ENCODE measurements at regions of chr14 and their contacts with region 1.

Region 1: GRCh38 chr14:32576088-32576795 is 247.1 kb downstream of the AKAP6 start:
- DNase-seq: no peak
- ATAC-seq: peak; percentile 87

Region 2: DNA sequence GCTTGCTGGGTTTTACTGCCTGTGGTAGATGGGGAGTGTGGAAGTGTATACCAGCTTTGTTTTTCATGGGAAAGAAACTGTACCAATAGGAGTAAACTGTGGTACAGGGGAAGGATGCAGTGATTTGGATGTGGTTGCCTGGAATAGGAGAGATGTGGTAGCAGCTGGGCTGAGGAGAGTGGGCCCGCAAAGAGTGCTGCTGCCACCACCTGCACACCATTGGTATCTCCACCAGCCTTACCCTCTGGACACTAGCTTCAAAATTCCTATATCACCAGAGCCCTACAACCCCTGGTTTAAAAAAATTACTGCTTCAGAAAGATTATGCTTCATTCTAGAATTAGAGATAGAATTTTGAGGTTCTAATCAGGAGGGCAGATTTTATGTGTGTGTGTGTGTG is 193.5 kb before region 1 on chr14:
- intact Hi-C with region 1: no loop called
- DNase-seq: no peak
- ATAC-seq: peak; percentile 75

Region 3: GRCh38 chr14:32702562-32702961 is 126.3 kb after region 1 on chr14:
- intact Hi-C with region 1: loop called (anchors 10 kb)
- DNase-seq: peak; percentile 63
- ATAC-seq: peak; percentile 77

Region 4: DNA sequence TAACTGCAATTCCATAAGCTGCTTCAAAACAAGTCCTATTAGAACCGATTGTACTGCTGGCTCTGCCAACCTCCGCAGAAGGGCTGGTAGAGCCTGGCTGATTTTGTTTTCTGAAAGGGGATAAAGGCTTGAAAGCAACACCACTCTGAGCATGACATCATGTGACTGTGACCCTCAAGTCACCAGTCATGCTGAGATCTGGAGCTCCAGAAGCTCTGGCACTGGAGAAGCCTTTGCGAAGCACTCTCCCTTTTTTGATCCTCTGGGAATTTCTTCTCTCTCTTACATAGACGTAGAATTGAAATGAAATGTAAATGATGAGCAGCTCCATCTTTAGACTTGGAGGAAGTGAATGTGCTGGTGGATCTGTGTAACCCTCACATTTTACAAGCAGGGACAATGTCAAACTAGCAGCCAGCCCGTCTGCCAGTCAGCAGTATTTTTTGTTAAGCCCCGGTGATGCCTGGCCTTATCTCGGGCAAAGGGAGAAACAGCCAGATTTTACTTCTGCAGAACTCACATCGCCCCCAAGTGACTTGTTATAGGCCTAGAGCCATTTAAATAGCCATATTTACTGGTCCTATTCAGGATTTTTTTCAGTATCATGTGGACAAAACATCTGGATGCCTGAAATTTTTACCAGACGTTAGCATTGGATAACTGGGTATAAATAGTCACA is 250.3 kb after region 1 on chr14:
- intact Hi-C with region 1: loop called (anchors 10 kb)
- DNase-seq: no peak
- ATAC-seq: peak; percentile 69

Region 5: GRCh38 chr14:33792720-33793368 is 1216.6 kb after region 1 on chr14:
- intact Hi-C with region 1: loop called (anchors 10 kb)
- DNase-seq: peak; percentile 87
- ATAC-seq: peak; percentile 95